ENCODE measurements at regions of chr14 and their contacts with region 1.

Region 1: DNA sequence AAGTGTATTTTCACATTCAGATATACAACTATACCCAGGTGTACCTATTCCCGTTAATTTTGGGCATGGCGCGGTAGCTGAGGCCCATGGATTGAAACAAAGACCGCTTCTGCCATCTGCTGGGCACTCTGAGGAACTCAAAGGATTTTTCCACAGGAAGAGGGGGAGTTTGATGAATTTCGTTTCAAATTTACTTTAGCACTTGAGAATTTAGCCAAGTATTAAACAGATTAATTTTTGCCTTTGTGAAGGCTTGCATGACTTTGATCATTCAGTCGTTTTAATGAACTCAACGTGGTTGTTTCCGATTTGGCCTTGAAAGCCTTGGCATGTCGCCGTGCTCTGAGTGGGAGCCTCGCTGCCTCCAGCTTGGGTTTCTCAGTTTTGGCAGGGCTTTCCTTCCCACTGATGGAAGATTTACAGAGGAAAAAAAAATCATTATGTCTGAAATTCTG is 153.2 kb upstream of the DDHD1 start:
- DNase-seq: peak; percentile 61

Region 2: DNA sequence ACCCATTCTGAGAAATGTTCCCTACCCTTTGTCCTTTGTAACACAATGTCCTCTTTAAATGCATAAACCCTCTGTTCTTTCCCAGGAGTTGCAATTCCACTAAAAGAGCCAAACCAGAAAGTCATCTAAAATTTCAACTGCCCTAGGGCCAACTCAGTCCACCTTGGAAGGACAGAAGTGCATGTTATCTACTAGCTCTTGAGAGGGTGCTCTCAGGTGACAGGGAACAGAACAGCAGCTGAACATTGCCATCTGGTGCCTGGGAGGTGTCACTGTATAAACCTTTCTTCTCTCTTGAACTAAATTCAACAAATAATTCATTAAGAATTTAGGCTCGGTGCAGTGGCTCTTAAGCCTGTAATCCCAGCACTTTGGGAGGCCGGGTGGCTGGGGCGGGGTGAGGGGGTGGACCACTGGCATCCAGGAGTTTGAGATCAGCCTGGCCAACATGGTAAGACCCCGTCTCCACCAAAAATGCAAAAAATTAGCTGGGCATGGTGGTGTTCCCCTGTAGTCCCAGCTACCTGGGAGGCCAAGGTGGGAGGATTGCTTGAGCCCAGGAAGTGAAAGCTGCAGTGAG is 345.1 kb before region 1 on chr14:
- CTCF ChIA-PET with region 1: interaction called, 12 read pairs
- POLR2A ChIA-PET with region 1: no interaction called
- DNase-seq: peak; percentile 74

Region 3: GRCh38 chr14:53295985-53296582 is 10.2 kb before region 1 on chr14:
- CTCF ChIA-PET with region 1: interaction called, 26 read pairs
- POLR2A ChIA-PET with region 1: no interaction called
- DNase-seq: peak; percentile 41

Region 4: GRCh38 chr14:53331921-53332320 is 25.6 kb after region 1 on chr14:
- CTCF ChIA-PET with region 1: no interaction called
- POLR2A ChIA-PET with region 1: no interaction called
- DNase-seq: no peak

Region 5: GRCh38 chr14:53850714-53851296 is 544.5 kb after region 1 on chr14:
- CTCF ChIA-PET with region 1: no interaction called
- POLR2A ChIA-PET with region 1: no interaction called
- DNase-seq: no peak

Measured in HEK293T (cell line).